ENCODE measurements at regions of chr12 and their contacts with region 1.

Region 1: DNA sequence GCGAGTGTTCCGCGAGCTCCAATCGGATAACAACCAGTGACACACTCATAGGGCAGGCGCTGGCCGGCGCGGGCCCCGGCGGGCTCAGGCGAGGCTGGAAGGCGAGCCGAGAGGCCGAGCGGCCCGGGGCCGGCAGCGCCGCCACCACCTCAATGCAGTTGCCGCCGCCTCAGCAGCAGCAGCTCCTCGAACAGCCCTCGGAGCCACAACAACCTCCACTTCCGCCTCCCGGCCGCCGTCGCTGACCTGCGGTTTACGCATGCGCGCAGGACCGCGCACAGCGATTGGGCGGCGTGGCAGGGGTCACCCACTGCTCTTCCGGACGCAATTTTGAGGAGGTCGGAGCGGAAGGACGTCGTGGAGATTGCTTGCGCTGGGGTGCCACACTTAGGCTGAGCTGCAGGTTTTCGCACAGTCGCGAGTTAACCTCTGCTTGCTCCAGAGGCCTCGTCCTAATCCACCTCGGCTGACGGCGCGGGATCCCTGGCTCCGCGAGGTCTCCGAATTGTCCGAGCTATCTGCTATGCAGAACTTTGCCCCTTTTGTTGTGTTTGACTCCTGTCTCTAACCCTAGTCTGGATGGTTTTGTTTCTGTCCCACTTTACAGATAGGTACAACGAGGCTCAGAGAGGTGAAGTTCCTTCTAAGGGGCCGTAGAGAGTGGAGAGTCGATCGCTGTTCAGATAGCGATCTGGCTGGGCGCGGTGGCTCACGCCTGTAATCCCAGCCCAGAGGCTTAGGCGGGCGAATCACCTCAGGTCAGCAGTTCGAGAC is at the starts of genes ACAD10 and BRAP:
- DNase-seq: peak; percentile 98
- ATAC-seq: peak; percentile 95
- H3K4me3 ChIP-seq: peak within 1 kb of the TSS; percentile 86
- H3K27ac ChIP-seq: peak within 1 kb of the TSS; percentile 48
- H3K4me1 ChIP-seq: peaks cover 16% of the 10 kb centered on the region
- H3K27me3 ChIP-seq: no peaks in the 10 kb centered on the region
- CTCF ChIP-seq: no peak
- total RNA-seq, gene ACAD10: 21.8 and 27.4 TPM in 2 replicates
- total RNA-seq, gene BRAP: 18.0 and 24.7 TPM in 2 replicates

Region 2: GRCh38 chr12:111850526-111850925 is 164.6 kb after region 1 on chr12:
- CTCF ChIA-PET with region 1: no interaction called
- POLR2A ChIA-PET with region 1: interaction called, 11 read pairs
- intact Hi-C with region 1: no loop called
- DNase-seq: peak; percentile 60
- ATAC-seq: peak; percentile 93
- H3K4me3 ChIP-seq: no peak overlapping the region
- H3K27ac ChIP-seq: peak overlapping the region; percentile 14
- H3K4me1 ChIP-seq: peaks cover 5% of the 10 kb centered on the region; the same call in 1 of the 2 replicates
- H3K27me3 ChIP-seq: no peaks in the 10 kb centered on the region
- CTCF ChIP-seq: no peak